Right ventricle myocardium inferior (tissue), 1 donor: ENCODE measurements at regions of chr9 and their contacts with region 1.

Region 1: GRCh38 chr9:115013998-115014397 is 83.6 kb upstream of the TNFSF8 start:
- DNase-seq: peak; percentile 82
- ATAC-seq: peak; percentile 74

Region 2: GRCh38 chr9:114405294-114406034 is 608.5 kb before region 1 on chr9:
- intact Hi-C with region 1: loop called (anchors 2 kb)
- DNase-seq: peak; percentile 87
- ATAC-seq: peak; percentile 92

Region 3: GRCh38 chr9:114434878-114435311 is 579.1 kb before region 1 on chr9:
- intact Hi-C with region 1: loop called (anchors 10 kb)
- DNase-seq: no peak
- ATAC-seq: no peak

Region 4: GRCh38 chr9:114662081-114662989 is 351.7 kb before region 1 on chr9:
- intact Hi-C with region 1: loop called (anchors 5 kb)
- DNase-seq: no peak
- ATAC-seq: peak; percentile 59

Region 5: GRCh38 chr9:114681594-114682332 is 332.2 kb before region 1 on chr9 and contains the start of gene TEX48:
- intact Hi-C with region 1: loop called (anchors 5 kb)
- DNase-seq: no peak
- ATAC-seq: peak; percentile 59
- total RNA-seq, gene TEX48: not detected

Region 6: GRCh38 chr9:114738581-114739316 is 275.2 kb before region 1 on chr9:
- intact Hi-C with region 1: loop called (anchors 1 kb)
- DNase-seq: peak; percentile 77
- ATAC-seq: peak; percentile 79

Region 7: DNA sequence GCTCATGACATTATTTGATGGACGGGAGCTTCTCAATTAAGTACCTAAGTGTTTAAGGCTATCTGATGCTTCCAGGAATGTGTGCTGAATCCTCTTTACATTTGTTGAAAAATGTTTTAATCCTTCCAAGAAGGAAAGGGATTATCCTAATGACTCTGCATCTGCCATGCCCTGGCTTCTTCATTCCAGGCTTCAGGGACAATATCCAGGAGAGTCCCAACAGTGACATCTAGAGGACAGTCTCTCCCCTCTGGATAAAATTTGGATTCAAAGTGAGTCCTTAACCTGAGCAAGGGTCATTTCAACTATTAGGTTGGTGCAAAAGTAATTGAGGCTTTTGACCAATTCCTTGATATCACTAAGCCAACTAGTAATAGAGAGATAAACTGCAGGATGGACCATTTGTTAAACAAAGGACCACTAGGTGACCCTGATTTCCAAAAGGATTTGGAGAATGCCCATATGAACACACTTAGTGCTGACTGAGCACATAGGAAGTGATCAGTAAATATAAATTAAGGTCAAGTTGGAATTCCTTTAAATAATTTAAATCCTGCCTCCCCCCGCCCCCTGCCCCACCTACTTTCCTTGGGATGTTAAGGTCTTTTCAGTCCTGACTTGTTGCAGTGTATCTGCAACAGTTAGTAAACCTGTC is 102.7 kb before region 1 on chr9:
- intact Hi-C with region 1: loop called (anchors 2 kb)
- DNase-seq: no peak
- ATAC-seq: peak; percentile 59

Region 8: DNA sequence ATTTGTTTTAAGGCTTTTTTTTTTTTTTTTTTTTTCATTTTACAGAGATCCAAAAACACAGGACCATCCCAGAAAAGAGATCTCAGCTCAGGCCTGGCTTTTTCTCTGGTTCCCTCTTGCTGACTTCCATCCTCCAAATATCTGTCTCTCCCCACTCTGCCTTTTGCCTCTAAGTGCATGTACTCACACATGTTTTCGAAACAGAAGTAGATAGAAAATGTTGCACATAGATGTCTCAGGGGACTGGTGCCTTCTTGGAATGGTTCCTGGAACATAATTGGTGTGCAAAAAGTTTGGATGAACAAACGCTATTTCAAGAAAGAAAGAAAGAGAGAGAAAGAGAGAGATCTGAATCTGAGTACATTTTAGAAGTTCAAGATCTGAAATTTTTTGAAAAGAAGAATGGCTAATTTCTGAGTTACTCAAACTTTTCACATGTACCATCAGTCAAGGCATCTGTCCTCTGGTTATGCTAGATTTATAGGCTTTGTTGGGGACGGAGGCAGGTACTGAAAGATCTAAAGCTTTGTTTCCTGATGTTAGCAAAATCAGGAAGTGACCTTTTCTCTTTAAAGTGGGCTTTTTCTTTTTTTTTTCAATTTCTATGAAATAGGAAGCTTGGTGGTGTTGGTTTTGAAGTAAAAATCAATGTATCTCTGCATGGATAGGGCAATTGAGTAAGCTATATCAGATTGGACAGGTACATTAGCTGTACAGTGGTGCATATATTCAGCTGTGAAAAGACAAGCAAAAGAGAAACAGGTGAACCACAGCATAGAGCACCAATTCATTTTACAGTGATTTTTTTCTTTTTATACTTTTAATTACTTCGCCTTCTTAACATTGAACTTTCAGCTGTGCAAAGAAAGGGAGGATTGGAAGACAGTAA is 75.1 kb before region 1 on chr9:
- intact Hi-C with region 1: no loop called
- DNase-seq: no peak
- ATAC-seq: peak; percentile 69

Region 9: DNA sequence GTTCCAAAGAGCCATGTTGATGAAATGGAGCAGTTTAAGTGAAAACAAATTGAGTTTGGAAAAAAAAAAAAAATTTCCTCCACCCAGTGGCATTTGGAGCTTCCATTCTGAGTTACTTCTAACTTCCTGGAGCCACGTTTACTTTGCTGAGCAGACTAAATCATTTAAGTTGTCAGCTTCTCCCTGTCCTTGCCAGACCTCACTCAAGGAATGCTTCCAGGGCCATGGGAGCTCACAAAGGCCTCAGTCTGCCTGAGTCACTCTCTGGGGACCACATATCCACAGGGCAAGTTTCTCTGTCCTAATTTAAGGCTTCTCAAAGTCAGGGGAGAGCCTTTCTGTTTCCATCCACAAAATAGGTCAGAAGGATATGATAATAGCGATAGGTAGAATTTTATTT is 314.2 kb after region 1 on chr9:
- intact Hi-C with region 1: no loop called
- DNase-seq: no peak
- ATAC-seq: peak; percentile 83